Ovary (tissue), 10 donors: ENCODE measurements at regions of chr3 and their contacts with region 1.

Region 1: GRCh38 chr3:11976976-11977375 is 27.2 kb upstream of the SYN2 start:
- DNase-seq: no peak
- H3K4me3 ChIP-seq: no peak overlapping the region
- H3K27ac ChIP-seq: no peak overlapping the region
- H3K4me1 ChIP-seq: no peaks in the 10 kb centered on the region
- H3K27me3 ChIP-seq: no peaks in the 10 kb centered on the region
- CTCF ChIP-seq: no peak
- EP300 ChIP-seq: no peak
- POLR2A ChIP-seq: no peak

Region 2: DNA sequence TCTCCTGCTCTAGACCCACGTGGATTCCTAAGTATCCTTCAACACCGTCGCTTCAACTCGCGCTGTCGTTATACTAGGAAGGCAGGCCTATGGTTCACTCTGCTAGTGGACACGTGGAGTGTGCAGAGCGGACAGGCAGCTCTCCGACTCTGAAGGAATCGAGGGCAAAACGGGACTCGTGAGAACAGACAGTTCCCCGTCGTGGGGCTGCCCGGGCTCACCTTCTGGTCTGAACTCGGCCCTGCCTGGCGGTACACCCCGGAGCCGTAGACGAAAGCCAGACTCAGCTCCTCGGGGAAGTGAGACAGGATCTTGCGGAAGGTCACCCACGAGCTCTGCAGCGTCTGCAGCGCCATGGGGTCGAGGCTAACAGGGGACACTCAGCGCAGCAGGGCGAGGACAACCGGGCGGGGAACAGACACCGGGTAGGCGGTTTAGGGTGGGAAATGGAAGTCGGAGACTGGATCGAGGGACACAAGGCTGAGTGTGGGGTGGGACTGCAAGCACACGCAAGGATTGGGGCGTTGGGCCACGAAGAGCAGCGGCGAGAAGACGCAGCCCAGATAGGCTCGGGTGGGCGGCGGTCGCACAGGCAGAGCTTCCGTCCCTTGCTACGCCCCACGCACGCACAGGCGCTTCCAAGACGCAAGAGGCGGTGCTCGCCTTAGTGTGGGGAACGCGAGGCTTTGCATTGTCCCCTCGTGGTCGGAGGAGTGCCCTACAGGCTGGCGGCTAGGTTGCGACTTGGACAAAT is 130.5 kb before region 1 on chr3 and contains the start of gene TAMM41:
- intact Hi-C with region 1: no loop called
- DNase-seq: peak; percentile 85 to 91 (median 86)
- H3K4me3 ChIP-seq: peak within 1 kb of the TSS; percentile 91
- H3K27ac ChIP-seq: peak within 1 kb of the TSS; percentile 26 to 86
- H3K4me1 ChIP-seq: peaks cover 3% of the 10 kb centered on the region
- H3K27me3 ChIP-seq: no peaks in the 10 kb centered on the region
- CTCF ChIP-seq: peak; percentile 81 to 86 (median 81)
- EP300 ChIP-seq: no peak
- POLR2A ChIP-seq: peak; percentile 9
- total RNA-seq, gene TAMM41: 10.6 to 29.2 (median 23.7) TPM

Region 3: GRCh38 chr3:11907667-11908660 is 69.0 kb before region 1 on chr3:
- intact Hi-C with region 1: loop called in 1 of 4 experiments (anchors 2 kb)
- DNase-seq: no peak
- H3K4me3 ChIP-seq: no peak overlapping the region
- H3K27ac ChIP-seq: no peak overlapping the region
- H3K4me1 ChIP-seq: no peaks in the 10 kb centered on the region
- H3K27me3 ChIP-seq: no peaks in the 10 kb centered on the region
- CTCF ChIP-seq: no peak
- EP300 ChIP-seq: no peak
- POLR2A ChIP-seq: no peak